ENCODE measurements at regions of chr6 and their contacts with region 1.

Region 1: DNA sequence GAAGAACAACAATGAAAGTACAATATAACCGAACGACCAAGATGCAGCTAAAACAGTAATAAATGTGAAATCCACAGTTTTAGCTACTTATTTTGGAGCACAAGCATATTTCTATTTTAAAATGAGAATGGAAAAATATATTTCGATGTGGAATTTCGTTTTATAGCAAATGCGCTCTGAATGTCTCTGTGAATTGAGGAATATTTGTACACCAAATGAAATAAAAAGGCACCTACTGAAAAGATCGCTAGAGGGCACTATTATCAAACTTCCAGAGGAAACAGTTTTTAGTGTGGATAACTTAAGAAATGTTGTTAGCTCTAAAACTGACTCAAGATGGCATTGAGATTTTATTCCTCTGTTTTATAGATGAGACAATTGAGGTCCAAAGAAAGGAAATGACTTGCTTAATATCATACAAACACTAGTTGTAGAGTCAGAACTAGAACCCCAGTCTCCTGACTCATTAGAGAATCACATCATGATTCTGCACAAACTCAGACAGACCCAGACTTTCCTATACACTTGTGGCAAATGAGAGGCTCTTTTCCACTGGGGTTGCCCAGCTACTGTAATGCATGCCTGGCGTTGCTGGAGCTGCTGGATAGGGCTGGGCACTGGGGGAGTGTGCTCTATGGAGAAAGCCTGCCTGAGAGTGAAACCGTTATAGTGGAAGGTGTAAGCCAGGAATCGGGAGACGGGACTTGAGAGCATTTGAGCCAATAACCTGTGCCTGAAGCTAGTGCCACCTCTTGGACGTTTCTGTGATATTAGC is 51.9 kb downstream of the GCLC start:
- DNase-seq: peak; percentile 46
- ATAC-seq: peak; percentile 89
- H3K4me3 Mint-ChIP-seq: no peak overlapping the region
- H3K27ac Mint-ChIP-seq: no peak overlapping the region
- H3K4me1 Mint-ChIP-seq: peaks cover 14% of the 10 kb centered on the region
- H3K27me3 Mint-ChIP-seq: peaks cover 6% of the 10 kb centered on the region

Region 2: GRCh38 chr6:53651764-53652401 is 158.8 kb after region 1 on chr6:
- CTCF ChIA-PET with region 1: interaction called, 29 read pairs
- DNase-seq: peak; percentile 88
- ATAC-seq: peak; percentile 95
- H3K4me3 Mint-ChIP-seq: peak overlapping the region; percentile 85
- H3K27ac Mint-ChIP-seq: peak overlapping the region; percentile 91
- H3K4me1 Mint-ChIP-seq: peaks cover 38% of the 10 kb centered on the region
- H3K27me3 Mint-ChIP-seq: peaks cover 7% of the 10 kb centered on the region